CD4-positive, alpha-beta T cell (primary cell): ENCODE measurements at regions of chr17 and their contacts with region 1.

Region 1: DNA sequence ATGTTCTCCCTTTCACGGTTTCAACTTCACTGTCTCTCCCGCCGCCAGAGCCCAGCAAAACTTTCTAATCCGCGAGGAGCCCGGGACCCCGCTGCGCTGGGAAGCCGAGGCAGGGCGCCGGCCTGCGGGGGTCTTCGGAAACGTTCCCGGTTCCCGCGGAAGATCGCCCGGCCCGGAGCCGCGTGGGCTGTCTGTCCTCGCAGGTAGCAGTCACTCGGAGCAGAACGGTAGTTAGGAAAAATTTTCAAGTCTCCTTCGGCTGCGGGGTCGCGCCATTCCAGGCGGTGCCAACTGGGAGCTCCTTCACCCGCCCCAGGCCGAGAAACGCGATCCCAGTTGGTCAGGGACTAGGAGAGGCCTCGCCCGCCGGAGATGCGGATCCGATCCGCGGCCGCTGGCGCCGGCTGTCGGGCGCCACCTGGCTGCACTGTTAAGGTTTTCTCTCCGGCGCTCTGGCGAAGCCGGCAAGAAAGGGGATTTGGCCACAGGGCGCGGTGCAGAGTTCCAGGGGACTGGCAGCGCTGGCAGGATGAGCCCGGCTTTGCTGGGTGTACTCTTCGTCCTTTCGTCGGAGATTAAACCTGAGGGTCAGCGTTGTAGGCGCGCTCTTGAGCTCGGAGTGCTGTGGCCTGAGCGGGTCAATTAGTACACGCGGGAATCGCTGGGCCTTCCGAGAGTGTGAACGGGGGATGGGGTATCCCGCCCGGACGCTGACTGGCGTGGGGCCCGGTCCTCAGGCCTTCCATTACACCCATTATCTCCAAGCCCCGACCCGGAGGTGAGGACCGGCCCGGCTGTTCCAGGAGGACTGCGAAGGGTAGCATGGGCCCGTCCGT is 135.4 kb downstream of the KCNJ12 start:
- DNase-seq: peak; percentile 38 to 82 (median 56)
- ATAC-seq: peak; percentile 74
- H3K4me3 ChIP-seq: peak overlapping the region; percentile 58
- H3K4me3 Mint-ChIP-seq: peak overlapping the region; percentile 76
- H3K27ac ChIP-seq: no peak overlapping the region
- H3K27ac Mint-ChIP-seq: no peak overlapping the region
- H3K4me1 ChIP-seq: peaks cover 19% of the 10 kb centered on the region
- H3K4me1 Mint-ChIP-seq: peaks cover 15% of the 10 kb centered on the region
- H3K27me3 ChIP-seq: peaks cover 9 to 17% of the 10 kb centered on the region in 2 experiments
- H3K27me3 Mint-ChIP-seq: peaks cover 43% of the 10 kb centered on the region
- CTCF ChIP-seq: peak; percentile 71

Region 2: GRCh38 chr17:21019976-21020586 is 491.5 kb before region 1 on chr17:
- CTCF ChIA-PET with region 1: no interaction called
- POLR2A ChIA-PET with region 1: no interaction called
- intact Hi-C with region 1: loop called in 1 of 2 experiments (anchors 5 kb)
- DNase-seq: peak in 10 of 14 experiments; percentile 27 to 72 (median 40)
- ATAC-seq: peak; percentile 74
- H3K4me3 ChIP-seq: no peak overlapping the region
- H3K4me3 Mint-ChIP-seq: no peak overlapping the region
- H3K27ac ChIP-seq: no peak overlapping the region
- H3K27ac Mint-ChIP-seq: peak overlapping the region; percentile 47
- H3K4me1 ChIP-seq: peaks cover 21% of the 10 kb centered on the region
- H3K4me1 Mint-ChIP-seq: peaks cover 37% of the 10 kb centered on the region
- H3K27me3 ChIP-seq: no peaks in the 10 kb centered on the region
- H3K27me3 Mint-ChIP-seq: no peaks in the 10 kb centered on the region
- CTCF ChIP-seq: no peak

Region 3: DNA sequence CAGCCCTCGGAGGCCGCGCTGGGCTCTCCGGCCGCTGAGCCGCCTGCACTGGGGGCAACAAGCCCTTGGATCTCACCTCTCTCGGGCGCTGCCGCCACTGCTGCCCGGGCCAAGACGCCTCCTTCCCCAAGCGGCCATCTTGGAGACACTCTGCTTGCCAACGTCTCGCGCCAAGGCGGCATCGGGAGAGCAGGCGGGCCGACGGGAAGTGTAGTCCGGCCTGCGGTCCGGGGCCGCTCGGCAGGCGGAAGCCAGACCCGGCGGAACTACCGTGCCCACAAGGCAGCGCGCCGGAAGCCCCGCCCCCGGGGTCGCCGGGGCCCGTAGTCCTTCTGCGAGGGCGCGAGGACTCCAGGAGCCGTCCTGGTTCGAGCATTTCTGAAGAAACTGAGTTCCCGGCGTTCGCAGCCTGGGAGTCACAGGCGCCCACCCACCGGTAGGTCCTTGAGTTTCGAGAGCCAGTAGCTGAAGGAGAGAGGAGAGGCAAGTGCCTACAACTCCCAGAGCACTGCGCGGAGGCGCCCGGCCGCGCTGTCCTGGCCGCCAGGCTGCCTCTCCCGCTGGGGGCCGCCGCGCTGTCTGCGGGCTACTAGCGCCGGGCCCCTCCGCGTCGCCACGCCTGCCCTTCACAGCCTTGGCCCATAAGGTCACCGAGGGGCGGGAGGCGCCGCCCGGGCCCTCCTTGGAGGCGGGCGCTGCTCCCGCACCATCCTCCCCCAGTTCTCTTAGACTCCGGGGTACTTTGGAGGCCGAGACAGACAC is 297.4 kb before region 1 on chr17 and contains the start of gene TMEM11:
- CTCF ChIA-PET with region 1: interaction called, 3 read pairs
- POLR2A ChIA-PET with region 1: no interaction called
- intact Hi-C with region 1: loop called in 1 of 2 experiments (anchors 5 kb)
- DNase-seq: peak; percentile 89 to 98 (median 94)
- ATAC-seq: peak; percentile 94
- H3K4me3 ChIP-seq: peak within 1 kb of the TSS; percentile 97
- H3K4me3 Mint-ChIP-seq: peak within 1 kb of the TSS; percentile 98
- H3K27ac ChIP-seq: peak within 1 kb of the TSS; percentile 87
- H3K27ac Mint-ChIP-seq: peak within 1 kb of the TSS; percentile 85
- H3K4me1 ChIP-seq: peaks cover 53% of the 10 kb centered on the region
- H3K4me1 Mint-ChIP-seq: peaks cover 77% of the 10 kb centered on the region
- H3K27me3 ChIP-seq: no peaks in the 10 kb centered on the region
- H3K27me3 Mint-ChIP-seq: no peaks in the 10 kb centered on the region
- CTCF ChIP-seq: no peak
- total RNA-seq, gene TMEM11: 17.8 to 19.2 TPM

Region 4: DNA sequence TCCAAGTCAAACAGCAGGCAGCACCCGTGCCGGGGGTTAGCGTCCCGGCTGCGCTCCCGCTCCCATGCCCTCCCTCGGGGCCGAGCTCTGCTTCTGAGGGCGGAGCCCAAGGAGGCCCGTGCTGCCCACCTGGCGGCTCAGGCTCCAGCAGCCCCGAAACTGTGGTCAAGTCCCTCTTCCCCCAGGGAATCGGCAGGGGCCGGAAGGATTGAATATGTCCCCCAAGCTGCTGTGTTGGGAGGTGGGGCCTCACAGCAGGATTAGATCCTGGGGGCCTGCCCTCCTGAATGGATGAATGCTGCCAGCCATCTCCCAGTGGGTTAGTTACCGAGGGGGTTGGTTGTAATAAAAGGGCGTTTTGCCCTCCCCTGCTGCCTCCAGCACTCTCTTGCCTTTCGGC is 193.1 kb before region 1 on chr17:
- CTCF ChIA-PET with region 1: interaction called, 3 read pairs
- POLR2A ChIA-PET with region 1: no interaction called
- intact Hi-C with region 1: loop called (anchors 2 to 10 kb)
- DNase-seq: peak in 1 of 14 experiments; percentile 18
- ATAC-seq: no peak
- H3K4me3 ChIP-seq: no peak overlapping the region
- H3K4me3 Mint-ChIP-seq: no peak overlapping the region
- H3K27ac ChIP-seq: no peak overlapping the region
- H3K27ac Mint-ChIP-seq: no peak overlapping the region
- H3K4me1 ChIP-seq: peaks cover 14% of the 10 kb centered on the region
- H3K4me1 Mint-ChIP-seq: peaks cover 6% of the 10 kb centered on the region
- H3K27me3 ChIP-seq: no peaks in the 10 kb centered on the region
- H3K27me3 Mint-ChIP-seq: peaks cover 4% of the 10 kb centered on the region
- CTCF ChIP-seq: no peak

Region 5: GRCh38 chr17:21445091-21445650 is 66.4 kb before region 1 on chr17:
- CTCF ChIA-PET with region 1: no interaction called
- POLR2A ChIA-PET with region 1: no interaction called
- intact Hi-C with region 1: no loop called
- DNase-seq: no peak
- ATAC-seq: no peak
- H3K4me3 ChIP-seq: no peak overlapping the region
- H3K4me3 Mint-ChIP-seq: no peak overlapping the region
- H3K27ac ChIP-seq: no peak overlapping the region
- H3K27ac Mint-ChIP-seq: no peak overlapping the region
- H3K4me1 ChIP-seq: no peaks in the 10 kb centered on the region
- H3K4me1 Mint-ChIP-seq: no peaks in the 10 kb centered on the region
- H3K27me3 ChIP-seq: peaks cover 0 to under 1% of the 10 kb centered on the region in 2 experiments
- H3K27me3 Mint-ChIP-seq: peaks cover 5% of the 10 kb centered on the region
- CTCF ChIP-seq: no peak

Region 6: DNA sequence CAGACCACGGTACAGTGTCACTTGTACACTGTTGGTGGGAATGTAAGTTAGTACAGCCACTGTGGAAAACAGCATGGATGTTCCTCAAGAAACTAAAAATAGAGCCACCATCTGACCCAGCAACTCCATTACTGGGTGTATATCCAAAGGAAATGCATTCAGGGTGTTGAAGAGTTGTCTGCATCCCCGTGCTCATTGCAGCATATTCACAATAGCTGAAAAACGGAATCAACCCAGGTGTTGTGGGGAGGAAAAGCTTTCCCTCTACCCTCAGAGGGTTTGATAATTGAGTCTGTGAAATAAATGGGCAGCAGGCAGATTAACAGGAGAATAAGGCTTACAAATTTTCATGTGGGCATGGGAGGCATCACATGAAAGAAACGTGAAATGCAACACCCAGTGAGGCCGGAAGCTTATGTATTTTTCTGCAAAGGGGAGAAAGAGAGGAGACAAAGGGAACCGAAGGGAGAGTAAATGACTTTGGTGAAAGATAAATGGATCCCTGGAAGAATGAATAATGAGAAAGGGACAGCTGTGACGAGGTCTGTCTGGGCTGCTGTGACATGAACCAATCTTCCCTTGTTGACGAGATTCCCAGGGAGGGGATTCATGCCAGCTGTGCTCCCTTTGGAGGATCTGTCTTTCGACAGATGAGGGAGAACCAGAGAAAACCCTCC is 29.3 kb before region 1 on chr17:
- CTCF ChIA-PET with region 1: no interaction called
- POLR2A ChIA-PET with region 1: no interaction called
- intact Hi-C with region 1: no loop called
- DNase-seq: no peak
- ATAC-seq: no peak
- H3K4me3 ChIP-seq: no peak overlapping the region
- H3K4me3 Mint-ChIP-seq: no peak overlapping the region
- H3K27ac ChIP-seq: no peak overlapping the region
- H3K27ac Mint-ChIP-seq: no peak overlapping the region
- H3K4me1 ChIP-seq: no peaks in the 10 kb centered on the region
- H3K4me1 Mint-ChIP-seq: no peaks in the 10 kb centered on the region
- H3K27me3 ChIP-seq: peaks cover 5 to 8% of the 10 kb centered on the region in 2 experiments
- H3K27me3 Mint-ChIP-seq: peaks cover 64% of the 10 kb centered on the region
- CTCF ChIP-seq: no peak

Region 7: GRCh38 chr17:21493993-21494392 is 17.6 kb before region 1 on chr17:
- CTCF ChIA-PET with region 1: no interaction called
- POLR2A ChIA-PET with region 1: no interaction called
- intact Hi-C with region 1: no loop called
- DNase-seq: no peak
- ATAC-seq: no peak
- H3K4me3 ChIP-seq: no peak overlapping the region
- H3K4me3 Mint-ChIP-seq: no peak overlapping the region
- H3K27ac ChIP-seq: no peak overlapping the region
- H3K27ac Mint-ChIP-seq: no peak overlapping the region
- H3K4me1 ChIP-seq: no peaks in the 10 kb centered on the region
- H3K4me1 Mint-ChIP-seq: no peaks in the 10 kb centered on the region
- H3K27me3 ChIP-seq: peaks cover 0 to 4% of the 10 kb centered on the region in 2 experiments
- H3K27me3 Mint-ChIP-seq: peaks cover 5% of the 10 kb centered on the region
- CTCF ChIP-seq: no peak

Region 8: DNA sequence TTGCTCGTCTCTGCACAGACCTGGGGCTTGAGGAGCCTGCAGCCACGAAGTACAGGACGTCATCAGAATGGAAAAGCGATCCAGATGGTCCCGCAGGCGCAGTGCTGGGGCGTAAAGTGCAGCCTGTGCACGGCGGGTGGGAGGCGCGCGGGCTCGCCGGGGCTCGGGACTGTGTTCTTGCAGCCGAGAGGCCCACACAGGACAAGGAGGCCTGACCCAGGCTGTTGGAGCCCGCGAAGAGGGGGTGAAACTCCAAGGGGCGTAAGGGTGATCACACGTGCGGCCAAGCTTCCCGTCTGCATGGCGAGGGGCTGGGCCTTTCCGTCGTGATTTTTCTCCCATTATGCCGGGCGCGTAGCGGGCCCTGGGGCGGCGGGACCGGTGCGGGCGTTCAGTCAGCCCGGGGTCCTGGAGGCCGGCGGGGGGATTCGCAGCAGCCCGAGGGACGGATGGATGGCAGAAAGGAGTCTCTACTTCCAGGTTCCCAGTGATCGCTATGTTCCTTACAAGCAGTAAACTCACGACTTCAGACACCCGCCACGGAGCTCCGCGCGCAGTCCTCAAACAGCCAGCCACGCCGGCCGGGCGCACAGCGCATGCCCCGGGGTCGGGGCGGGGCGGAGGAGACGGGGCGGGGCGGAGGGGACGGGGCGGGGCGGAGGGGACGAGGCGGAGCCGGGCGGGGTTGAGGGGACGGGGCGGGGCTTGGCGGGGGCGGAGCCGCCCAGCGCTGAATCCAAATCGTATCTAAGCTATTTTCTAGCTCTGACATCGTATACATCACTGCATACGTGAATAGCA is 39.7 kb after region 1 on chr17:
- CTCF ChIA-PET with region 1: interaction called, 10 read pairs
- POLR2A ChIA-PET with region 1: no interaction called
- intact Hi-C with region 1: no loop called
- DNase-seq: peak; percentile 67 to 90 (median 80)
- ATAC-seq: peak; percentile 90
- H3K4me3 ChIP-seq: peak overlapping the region; percentile 73
- H3K4me3 Mint-ChIP-seq: peak overlapping the region; percentile 92
- H3K27ac ChIP-seq: no peak overlapping the region
- H3K27ac Mint-ChIP-seq: peak overlapping the region; percentile 39
- H3K4me1 ChIP-seq: peaks cover 14% of the 10 kb centered on the region
- H3K4me1 Mint-ChIP-seq: peaks cover 50% of the 10 kb centered on the region
- H3K27me3 ChIP-seq: peaks cover 3 to 4% of the 10 kb centered on the region in 2 experiments
- H3K27me3 Mint-ChIP-seq: peaks cover 13% of the 10 kb centered on the region
- CTCF ChIP-seq: no peak